RWPE1 (cell line): ENCODE measurements at regions of chr1 and their contacts with region 1.

Region 1: GRCh38 chr1:23643736-23644554 is 47.7 kb upstream of the RPL11 start:
- DNase-seq: no peak
- H3K27ac ChIP-seq: no peak overlapping the region
- CTCF ChIP-seq: no peak

Region 2: DNA sequence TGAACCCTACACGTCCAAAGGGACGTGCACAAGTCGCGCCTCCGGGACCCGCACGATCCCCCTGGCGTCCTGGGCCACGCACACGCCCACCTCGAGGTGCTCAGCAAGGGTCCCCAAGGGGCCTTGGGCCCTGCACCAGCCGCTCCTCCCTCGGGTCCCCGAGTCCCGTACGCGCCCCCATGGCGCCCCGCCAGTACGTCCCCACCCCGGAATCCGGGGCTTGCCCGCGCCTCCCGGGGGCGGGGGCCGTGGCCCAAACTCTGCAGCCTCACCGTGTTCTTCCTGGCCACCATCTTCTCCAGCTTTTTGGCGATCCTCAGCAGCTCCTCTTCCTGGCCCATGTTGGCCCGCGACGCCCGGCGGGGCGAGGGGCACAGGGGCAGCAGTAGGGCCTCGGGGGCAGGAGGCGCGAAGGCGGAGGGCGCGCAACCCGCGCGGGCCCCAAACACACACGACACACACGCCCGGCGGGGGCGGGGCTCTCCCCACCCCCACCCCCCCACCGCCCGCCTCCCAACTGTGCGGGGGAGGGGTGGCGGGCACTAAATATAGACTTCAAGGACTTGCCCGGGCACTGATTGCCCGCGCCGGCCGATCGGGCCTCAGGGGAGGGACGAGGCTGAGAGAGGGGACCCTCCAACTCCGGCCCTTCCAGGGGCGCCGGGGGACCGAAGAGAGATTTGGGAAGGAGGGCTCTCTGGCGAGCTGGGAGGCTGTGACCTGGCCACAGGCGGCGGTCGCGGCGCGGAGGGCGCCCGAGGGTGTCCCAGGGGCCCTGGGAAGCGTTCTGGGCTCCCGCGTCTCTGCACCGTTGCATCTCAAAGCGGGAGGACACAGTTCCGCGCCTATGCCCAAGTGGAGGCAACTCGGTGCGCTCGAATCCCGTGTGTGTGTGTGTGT is 219.4 kb before region 1 on chr1 and contains the start of gene TCEA3:
- CTCF ChIA-PET with region 1: no interaction called
- POLR2A ChIA-PET with region 1: interaction called, 10 read pairs
- DNase-seq: peak; percentile 25
- H3K27ac ChIP-seq: peak within 1 kb of the TSS; percentile 76
- CTCF ChIP-seq: no peak

Region 3: GRCh38 chr1:23539698-23540266 is 104.2 kb before region 1 on chr1:
- CTCF ChIA-PET with region 1: interaction called, 97 read pairs
- POLR2A ChIA-PET with region 1: interaction called, 10 read pairs
- DNase-seq: peak; percentile 89
- H3K27ac ChIP-seq: no peak overlapping the region
- CTCF ChIP-seq: peak; percentile 95

Region 4: DNA sequence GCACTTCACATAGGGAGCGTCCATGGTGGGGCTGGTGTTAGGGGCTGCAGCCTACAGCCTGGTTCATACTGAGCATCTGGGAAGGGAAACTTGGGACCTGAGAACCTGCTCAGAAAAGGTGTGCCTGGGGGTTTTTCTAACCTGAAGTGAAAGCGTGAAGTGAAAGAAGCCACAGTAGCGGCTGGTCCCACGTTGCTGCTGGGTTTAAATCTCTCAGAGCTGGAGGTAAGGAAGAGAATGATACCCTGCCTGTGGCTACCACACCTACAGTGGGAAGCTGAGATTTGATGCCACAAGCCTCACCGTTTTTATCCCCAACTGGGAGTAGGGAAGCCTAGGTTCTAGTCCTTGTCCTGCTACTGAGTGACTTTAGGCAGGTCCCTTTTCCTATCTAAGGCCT is 245.1 kb after region 1 on chr1:
- CTCF ChIA-PET with region 1: no interaction called
- POLR2A ChIA-PET with region 1: no interaction called
- DNase-seq: no peak
- H3K27ac ChIP-seq: no peak overlapping the region
- CTCF ChIP-seq: no peak